Caco-2 (cell line): ENCODE measurements at regions of chr6 and their contacts with region 1.

Region 1: GRCh38 chr6:110528101-110528929 is 51.9 kb upstream of the SLC22A16 start:
- DNase-seq: peak in 1 of 2 experiments; percentile 58
- H3K4me3 ChIP-seq: no peak overlapping the region
- H3K4me3 Mint-ChIP-seq: no peak overlapping the region
- H3K27ac Mint-ChIP-seq: no peak overlapping the region
- H3K4me1 ChIP-seq: peaks cover 3% of the 10 kb centered on the region; the same call in 1 of the 2 replicates
- H3K4me1 Mint-ChIP-seq: no peaks in the 10 kb centered on the region
- H3K27me3 ChIP-seq: no peaks in the 10 kb centered on the region
- H3K27me3 Mint-ChIP-seq: no peaks in the 10 kb centered on the region
- CTCF ChIP-seq: peak; percentile 68 to 79

Region 2: DNA sequence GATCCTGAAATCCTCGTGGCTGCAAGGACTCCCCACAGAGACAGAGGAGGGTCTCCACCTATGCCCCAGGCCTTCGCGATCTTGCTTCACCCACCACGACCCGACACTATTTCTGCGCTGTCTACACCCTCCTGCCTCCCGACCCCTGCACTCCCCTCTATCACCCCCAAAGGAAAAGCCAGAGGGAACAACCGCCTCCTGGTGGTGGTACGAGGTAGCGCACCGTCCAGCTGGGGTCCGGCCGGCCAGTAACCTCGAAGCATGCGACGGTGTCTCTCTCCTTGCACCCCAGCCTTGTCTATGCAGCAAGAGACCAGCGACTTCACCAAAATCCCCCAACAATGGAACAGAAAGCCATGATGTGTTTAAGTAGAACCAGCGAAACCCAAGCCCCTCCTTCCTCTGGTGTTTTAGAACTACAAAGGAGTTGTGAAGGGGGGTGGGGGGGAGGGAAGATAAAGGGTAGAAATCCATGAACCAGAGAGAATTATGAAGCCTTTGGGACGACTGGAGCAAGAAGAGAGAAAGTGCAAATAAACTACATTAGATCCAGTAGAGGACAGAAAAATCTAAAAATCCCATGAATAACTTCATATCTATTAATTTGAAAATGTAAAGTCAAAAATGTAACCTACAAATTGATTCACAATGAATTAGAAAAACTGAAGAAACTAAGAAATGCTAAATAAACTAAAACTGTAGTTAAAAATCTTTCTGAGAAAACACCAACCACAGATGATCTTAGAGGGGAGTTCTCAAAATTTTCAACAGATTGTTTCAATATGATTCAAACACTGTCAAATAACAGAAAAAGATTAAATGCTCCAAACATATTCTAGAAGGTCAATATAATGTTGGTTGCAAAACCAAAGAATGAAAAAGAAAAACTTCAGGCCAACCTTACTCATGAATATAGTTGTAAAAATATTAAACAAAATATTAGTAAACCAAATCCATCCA is 118.9 kb after region 1 on chr6:
- CTCF ChIA-PET with region 1: no interaction called
- POLR2A ChIA-PET with region 1: no interaction called
- intact Hi-C with region 1: no loop called
- DNase-seq: no peak
- H3K4me3 ChIP-seq: no peak overlapping the region
- H3K4me3 Mint-ChIP-seq: no peak overlapping the region
- H3K27ac Mint-ChIP-seq: no peak overlapping the region
- H3K4me1 ChIP-seq: no peaks in the 10 kb centered on the region
- H3K4me1 Mint-ChIP-seq: no peaks in the 10 kb centered on the region
- H3K27me3 ChIP-seq: no peaks in the 10 kb centered on the region
- H3K27me3 Mint-ChIP-seq: no peaks in the 10 kb centered on the region
- CTCF ChIP-seq: peak in 1 of 2 experiments; percentile 47

Region 3: GRCh38 chr6:110949679-110950285 is 421.5 kb after region 1 on chr6:
- CTCF ChIA-PET with region 1: no interaction called
- POLR2A ChIA-PET with region 1: no interaction called
- intact Hi-C with region 1: loop called (anchors 1 kb)
- DNase-seq: no peak
- H3K4me3 ChIP-seq: no peak overlapping the region
- H3K4me3 Mint-ChIP-seq: no peak overlapping the region
- H3K27ac Mint-ChIP-seq: no peak overlapping the region
- H3K4me1 ChIP-seq: peaks cover 29% of the 10 kb centered on the region
- H3K4me1 Mint-ChIP-seq: peaks cover 31% of the 10 kb centered on the region
- H3K27me3 ChIP-seq: no peaks in the 10 kb centered on the region
- H3K27me3 Mint-ChIP-seq: no peaks in the 10 kb centered on the region
- CTCF ChIP-seq: peak; percentile 37 to 43

Region 4: DNA sequence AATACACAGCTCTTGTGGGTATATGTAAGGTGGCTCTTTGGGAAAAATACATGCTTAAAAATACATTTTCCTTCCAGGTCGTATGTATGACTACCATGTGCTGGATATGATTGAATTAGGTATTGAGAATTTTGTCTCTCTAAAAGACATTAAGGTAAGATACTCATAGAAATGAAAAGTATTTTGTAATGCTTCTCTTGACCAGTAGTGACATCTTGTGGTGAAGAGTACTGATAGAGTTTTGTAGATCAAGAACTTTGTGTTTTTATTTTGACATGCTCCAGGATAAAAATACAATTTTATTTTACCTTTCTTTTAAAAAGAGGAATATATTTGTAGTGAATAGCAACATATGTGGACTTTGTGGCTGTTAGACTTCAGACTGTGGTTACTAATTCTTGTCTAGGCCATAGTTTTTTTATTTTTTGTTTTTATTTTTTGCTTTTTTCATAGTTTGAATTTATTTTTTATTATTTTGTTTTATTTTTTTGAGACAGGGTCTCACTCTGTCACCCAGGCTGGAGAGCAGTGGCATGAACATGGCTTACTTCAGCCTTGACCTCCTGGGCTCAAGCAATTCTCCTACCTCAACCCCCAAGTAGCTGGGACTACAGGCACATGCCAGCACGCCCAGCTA is 471.4 kb after region 1 on chr6:
- CTCF ChIA-PET with region 1: no interaction called
- POLR2A ChIA-PET with region 1: no interaction called
- intact Hi-C with region 1: loop called (anchors 1 kb)
- DNase-seq: no peak
- H3K4me3 ChIP-seq: no peak overlapping the region
- H3K4me3 Mint-ChIP-seq: no peak overlapping the region
- H3K27ac Mint-ChIP-seq: no peak overlapping the region
- H3K4me1 ChIP-seq: no peaks in the 10 kb centered on the region
- H3K4me1 Mint-ChIP-seq: no peaks in the 10 kb centered on the region
- H3K27me3 ChIP-seq: no peaks in the 10 kb centered on the region
- H3K27me3 Mint-ChIP-seq: no peaks in the 10 kb centered on the region
- CTCF ChIP-seq: peak; percentile 24 to 31

Region 5: DNA sequence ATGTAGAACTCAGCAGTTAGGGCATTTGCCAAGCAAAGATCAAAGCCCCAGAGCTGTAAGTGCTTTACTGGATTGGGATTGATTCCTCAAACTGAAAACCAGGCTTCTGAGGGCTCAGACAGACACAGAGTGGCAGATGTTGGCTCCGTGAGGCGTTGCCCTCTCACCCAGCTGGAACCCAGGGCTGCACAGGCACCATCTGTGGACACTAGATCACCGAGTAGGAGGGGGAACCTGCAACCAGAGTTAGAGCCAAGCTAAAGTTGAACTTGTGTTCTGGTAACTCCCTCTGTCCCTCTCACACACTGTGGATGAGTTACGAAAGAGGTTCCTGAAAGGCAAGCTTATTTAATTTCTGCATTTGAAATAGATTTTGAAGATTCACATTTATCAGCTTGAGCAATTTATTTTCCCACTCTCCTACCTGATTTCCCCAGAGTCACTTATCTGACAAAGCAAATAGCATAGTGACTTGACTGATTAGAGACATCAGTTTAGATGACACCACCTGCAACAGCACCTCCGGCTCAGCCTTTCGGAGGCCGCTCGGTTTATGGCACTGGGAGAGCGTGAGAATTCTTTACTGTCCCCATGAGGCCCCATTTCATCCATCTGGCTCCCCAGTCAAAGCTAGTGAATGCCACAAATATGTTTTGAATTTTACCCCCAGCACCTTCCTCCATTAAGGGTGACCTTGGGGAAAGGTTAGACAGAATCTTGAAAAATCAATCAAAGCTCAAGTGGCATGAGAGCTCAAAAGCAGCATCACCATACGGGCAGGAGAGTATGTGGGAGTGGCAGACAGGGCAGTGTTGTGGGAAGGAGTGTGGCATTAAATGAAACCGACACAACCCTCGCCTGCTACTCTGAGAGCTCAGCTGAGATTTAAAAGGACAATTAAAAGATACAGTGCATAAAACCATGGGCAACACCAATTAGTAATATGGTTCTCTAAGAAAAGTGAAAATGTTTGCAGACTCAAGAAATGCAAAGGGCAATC is 502.0 kb after region 1 on chr6:
- CTCF ChIA-PET with region 1: no interaction called
- POLR2A ChIA-PET with region 1: no interaction called
- intact Hi-C with region 1: loop called (anchors 1 kb)
- DNase-seq: peak in 1 of 2 experiments; percentile 42
- H3K4me3 ChIP-seq: no peak overlapping the region
- H3K4me3 Mint-ChIP-seq: no peak overlapping the region
- H3K27ac Mint-ChIP-seq: no peak overlapping the region
- H3K4me1 ChIP-seq: no peaks in the 10 kb centered on the region; the same call in 1 of the 2 replicates
- H3K4me1 Mint-ChIP-seq: peaks cover 13% of the 10 kb centered on the region
- H3K27me3 ChIP-seq: no peaks in the 10 kb centered on the region
- H3K27me3 Mint-ChIP-seq: no peaks in the 10 kb centered on the region
- CTCF ChIP-seq: no peak